HAP-1 (cell line): ENCODE measurements at regions of chr19 and their contacts with region 1.

Region 1: GRCh38 chr19:55385740-55386529 is at the start of gene RPL28:
- DNase-seq: peak; percentile 95 to 98
- H3K4me3 ChIP-seq: peak within 1 kb of the TSS; percentile 88
- H3K4me1 ChIP-seq: peaks cover 31% of the 10 kb centered on the region
- H3K27me3 ChIP-seq: no peaks in the 10 kb centered on the region

Region 2: DNA sequence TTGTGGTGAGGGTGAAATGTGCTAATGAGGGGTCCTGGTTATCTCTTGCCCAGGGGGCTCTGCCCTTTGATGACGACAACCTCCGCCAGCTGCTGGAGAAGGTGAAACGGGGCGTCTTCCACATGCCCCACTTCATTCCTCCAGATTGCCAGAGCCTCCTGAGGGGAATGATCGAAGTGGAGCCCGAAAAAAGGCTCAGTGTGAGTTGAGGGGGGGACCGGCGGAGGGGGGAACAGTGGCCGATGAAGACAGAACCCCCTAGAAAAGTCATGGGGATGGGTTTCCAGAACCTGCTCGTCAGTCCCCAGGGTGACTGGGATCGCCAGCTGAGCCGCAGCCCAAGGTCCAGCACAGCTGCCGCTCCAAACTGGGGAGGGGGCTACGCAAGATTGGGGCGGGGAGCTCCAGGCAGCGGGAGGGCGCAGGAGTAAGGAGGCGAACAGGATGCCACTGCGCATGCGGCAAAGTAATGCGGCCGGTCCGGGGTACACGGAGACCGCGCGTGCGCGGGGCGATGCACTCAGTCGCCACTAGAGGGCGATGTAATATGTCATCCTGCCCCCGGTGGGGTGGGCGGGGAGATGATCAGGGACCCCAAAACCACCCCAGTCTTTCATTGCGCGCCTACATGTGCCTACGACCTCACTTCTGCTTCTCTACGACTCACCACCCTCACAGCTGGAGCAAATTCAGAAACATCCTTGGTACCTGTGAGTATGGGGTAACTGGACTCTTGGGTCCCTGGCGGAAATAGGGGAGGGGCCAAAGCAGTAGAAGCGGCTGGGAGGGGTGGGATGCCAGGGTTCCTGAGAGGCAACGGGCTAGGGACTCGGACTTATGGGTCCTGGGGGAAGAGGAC is 84.2 kb before region 1 on chr19:
- in situ Hi-C with region 1: loop called (anchors 10 kb)
- DNase-seq: peak; percentile 65 to 96
- H3K4me3 ChIP-seq: peak overlapping the region; percentile 34
- H3K4me1 ChIP-seq: peaks cover 8% of the 10 kb centered on the region; the same call in 1 of the 2 replicates
- H3K27me3 ChIP-seq: no peaks in the 10 kb centered on the region

Region 3: GRCh38 chr19:55336101-55336500 is 49.8 kb before region 1 on chr19:
- in situ Hi-C with region 1: no loop called
- DNase-seq: no peak
- H3K4me3 ChIP-seq: no peak overlapping the region
- H3K4me1 ChIP-seq: peaks cover 6% of the 10 kb centered on the region
- H3K27me3 ChIP-seq: no peaks in the 10 kb centered on the region

Region 4: DNA sequence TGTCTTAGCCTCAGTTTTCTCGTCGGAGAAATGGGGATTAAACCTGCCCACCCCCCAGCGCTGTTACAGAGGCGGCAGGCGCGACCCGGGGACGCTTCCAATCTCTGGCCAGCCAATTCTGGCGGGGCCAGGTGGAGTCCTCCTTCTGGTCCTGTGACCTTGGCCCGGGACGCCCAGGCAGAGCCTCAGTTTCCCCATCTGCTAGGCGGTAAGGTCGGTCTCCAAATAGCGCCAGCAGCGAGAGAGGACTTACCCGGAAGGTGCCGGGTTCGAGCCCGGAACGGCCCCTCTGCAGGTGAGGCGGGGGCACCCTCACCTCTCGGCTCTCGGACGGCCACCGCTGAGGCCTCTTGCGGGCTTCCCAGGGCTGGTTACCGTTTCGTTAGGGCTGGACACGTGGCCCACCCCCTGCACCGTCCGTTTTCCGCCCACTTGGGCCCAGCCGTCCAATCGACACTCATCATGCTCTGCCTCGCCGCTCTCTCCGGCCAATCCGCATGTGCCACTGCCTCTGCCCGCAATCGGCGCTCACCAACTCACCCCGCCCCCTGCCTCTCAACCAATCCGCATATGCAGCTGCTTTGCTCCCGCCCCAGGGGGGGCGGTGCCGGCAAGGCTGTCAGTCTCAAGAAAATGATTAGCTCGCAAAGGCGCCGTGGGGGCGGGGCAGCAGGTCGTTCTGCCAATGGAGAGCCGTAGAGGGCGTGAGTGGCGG is 75.5 kb after region 1 on chr19 and contains the start of gene ISOC2:
- in situ Hi-C with region 1: no loop called
- DNase-seq: peak; percentile 99 to 100
- H3K4me3 ChIP-seq: peak within 1 kb of the TSS; percentile 64
- H3K4me1 ChIP-seq: peaks cover 26% of the 10 kb centered on the region
- H3K27me3 ChIP-seq: no peaks in the 10 kb centered on the region